MCF 10A (cell line): ENCODE measurements at regions of chr6 and their contacts with region 1.

Region 1: GRCh38 chr6:28335564-28336283 is at the start of gene ZSCAN31:
- DNase-seq: peak; percentile 98
- H3K4me3 Mint-ChIP-seq: no peak within 1 kb of the TSS
- H3K27ac Mint-ChIP-seq: no peak within 1 kb of the TSS
- H3K4me1 Mint-ChIP-seq: no peaks in the 10 kb centered on the region
- H3K27me3 Mint-ChIP-seq: no peaks in the 10 kb centered on the region
- CTCF ChIP-seq: no peak
- total RNA-seq, gene ZSCAN31: 5.0 and 6.7 TPM in 2 replicates

Region 2: GRCh38 chr6:28281288-28282064 is 54.2 kb before region 1 on chr6 and contains the start of gene PGBD1:
- CTCF ChIA-PET with region 1: interaction called, 7 read pairs
- POLR2A ChIA-PET with region 1: interaction called, 30 read pairs
- intact Hi-C with region 1: loop called (anchors 1 kb)
- DNase-seq: peak; percentile 65
- H3K4me3 Mint-ChIP-seq: peak within 1 kb of the TSS; percentile 80
- H3K27ac Mint-ChIP-seq: no peak within 1 kb of the TSS
- H3K4me1 Mint-ChIP-seq: peaks cover 9% of the 10 kb centered on the region
- H3K27me3 Mint-ChIP-seq: no peaks in the 10 kb centered on the region
- CTCF ChIP-seq: no peak
- total RNA-seq, gene PGBD1: 2.5 and 2.9 TPM in 2 replicates

Region 3: GRCh38 chr6:28315628-28316027 is 20.1 kb before region 1 on chr6:
- CTCF ChIA-PET with region 1: interaction called, 3 read pairs
- POLR2A ChIA-PET with region 1: interaction called, 10 read pairs
- intact Hi-C with region 1: no loop called
- DNase-seq: no peak
- H3K4me3 Mint-ChIP-seq: no peak overlapping the region
- H3K27ac Mint-ChIP-seq: no peak overlapping the region
- H3K4me1 Mint-ChIP-seq: no peaks in the 10 kb centered on the region
- H3K27me3 Mint-ChIP-seq: no peaks in the 10 kb centered on the region
- CTCF ChIP-seq: no peak

Region 4: DNA sequence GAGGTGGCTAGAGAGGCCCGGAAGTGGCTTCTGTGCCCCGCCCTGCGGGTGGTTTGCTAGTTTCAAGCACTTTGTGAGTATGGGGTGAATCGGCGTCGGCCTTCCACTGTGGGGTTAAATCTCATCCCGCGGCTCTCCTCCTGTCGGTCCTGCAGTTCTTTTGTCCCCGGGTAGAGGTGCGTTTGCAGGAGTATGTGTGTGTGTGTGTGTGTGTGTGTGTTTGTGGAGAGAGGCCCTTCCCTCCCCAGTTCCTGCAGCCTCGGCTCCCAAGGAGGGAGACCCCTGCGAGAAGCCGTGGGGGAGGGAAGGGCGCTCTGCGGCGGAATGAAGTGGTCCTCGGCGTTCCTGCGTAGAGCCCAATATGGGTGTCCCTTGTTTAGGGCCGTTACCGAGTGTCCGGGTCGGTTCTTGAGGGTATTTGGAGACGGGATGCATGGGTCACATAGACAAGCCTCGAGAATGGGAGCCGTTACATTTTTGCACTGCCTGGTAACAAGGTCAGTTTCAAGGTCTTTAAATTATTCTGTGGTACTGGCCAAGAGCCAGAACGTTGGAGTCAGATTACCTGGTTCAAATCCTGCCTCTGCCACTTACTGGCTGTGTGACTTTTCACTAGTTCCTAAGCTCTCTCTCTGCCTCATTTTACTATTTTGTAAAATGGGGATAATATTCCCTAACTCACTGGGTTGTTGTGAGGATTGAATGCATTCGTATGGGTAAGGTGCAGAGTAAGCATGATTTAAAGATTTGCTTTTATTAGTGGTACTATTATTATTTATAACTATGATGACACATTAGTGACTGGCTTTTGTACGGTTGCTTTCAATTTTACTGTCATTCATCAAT is 14.4 kb after region 1 on chr6 and contains the start of gene ZKSCAN3:
- CTCF ChIA-PET with region 1: interaction called, 14 read pairs
- POLR2A ChIA-PET with region 1: interaction called, 71 read pairs
- intact Hi-C with region 1: no loop called
- DNase-seq: peak; percentile 82
- H3K4me3 Mint-ChIP-seq: peak within 1 kb of the TSS; percentile 99
- H3K27ac Mint-ChIP-seq: peak within 1 kb of the TSS; percentile 93
- H3K4me1 Mint-ChIP-seq: peaks cover 12% of the 10 kb centered on the region
- H3K27me3 Mint-ChIP-seq: peaks cover 20% of the 10 kb centered on the region
- CTCF ChIP-seq: no peak
- total RNA-seq, gene ZKSCAN3: 2.7 and 3.7 TPM in 2 replicates